ENCODE measurements at regions of chr10 and their contacts with region 1.

Region 1: GRCh38 chr10:103592186-103593021 is 98.9 kb downstream of the NEURL1 start:
- DNase-seq: peak in 1 of 2 donors; percentile 52
- ATAC-seq: no peak
- H3K4me3 ChIP-seq: no peak overlapping the region
- H3K27ac ChIP-seq: no peak overlapping the region
- H3K4me1 ChIP-seq: no peaks in the 10 kb centered on the region
- H3K27me3 ChIP-seq: no peaks in the 10 kb centered on the region

Region 2: GRCh38 chr10:102565793-102566192 is 1026.6 kb before region 1 on chr10:
- intact Hi-C with region 1: no loop called
- DNase-seq: no peak
- ATAC-seq: no peak
- H3K4me3 ChIP-seq: no peak overlapping the region
- H3K27ac ChIP-seq: no peak overlapping the region
- H3K4me1 ChIP-seq: no peaks in the 10 kb centered on the region
- H3K27me3 ChIP-seq: no peaks in the 10 kb centered on the region

Region 3: DNA sequence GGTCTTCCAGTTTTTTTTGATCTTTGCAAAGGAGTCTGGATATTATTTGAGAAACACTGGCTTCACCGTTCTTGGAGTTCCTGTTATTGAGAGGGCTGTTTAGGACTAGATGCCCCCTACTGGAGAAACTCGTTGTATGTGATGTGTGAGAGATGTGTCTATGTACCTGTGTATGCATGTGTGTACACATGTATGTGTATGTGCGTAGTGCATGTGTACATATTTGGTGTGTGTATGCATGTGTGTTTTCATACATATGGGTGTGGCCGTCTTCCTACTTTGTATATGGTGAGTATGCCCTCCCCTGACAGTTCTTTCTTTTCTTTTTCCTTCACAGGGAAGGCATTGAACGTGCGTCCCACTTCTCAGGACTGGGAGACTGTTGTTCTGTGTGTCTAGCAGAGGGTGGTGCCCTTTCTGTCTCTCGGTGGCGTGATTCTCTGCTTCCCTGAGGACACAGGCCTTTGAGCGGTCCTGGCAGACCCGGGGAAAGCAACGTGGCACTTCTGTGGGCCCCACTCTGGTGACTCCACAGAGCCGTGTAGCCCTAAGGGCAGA is 110.4 kb before region 1 on chr10:
- intact Hi-C with region 1: no loop called
- DNase-seq: no peak
- ATAC-seq: peak; percentile 76
- H3K4me3 ChIP-seq: no peak overlapping the region
- H3K27ac ChIP-seq: no peak overlapping the region
- H3K4me1 ChIP-seq: no peaks in the 10 kb centered on the region
- H3K27me3 ChIP-seq: no peaks in the 10 kb centered on the region

Region 4: DNA sequence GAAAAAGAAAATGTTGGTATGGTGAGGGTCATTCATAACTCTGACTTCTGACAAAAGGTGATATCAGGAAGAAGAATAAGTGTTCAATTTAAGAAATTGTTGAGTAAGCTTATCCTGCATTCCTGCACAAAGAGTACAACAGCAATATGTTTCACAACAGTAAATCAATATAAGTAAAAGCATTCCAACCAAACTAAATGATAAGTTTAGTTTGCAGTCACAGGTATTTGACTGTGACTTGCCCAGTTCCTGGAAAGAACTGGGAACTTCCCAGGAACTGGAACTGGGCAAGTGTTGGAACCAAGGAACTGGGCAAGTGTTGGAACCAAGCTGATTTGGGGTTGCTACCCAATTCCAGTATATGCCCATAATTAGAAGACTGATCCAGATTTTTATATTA is 63.8 kb before region 1 on chr10:
- intact Hi-C with region 1: no loop called
- DNase-seq: no peak
- ATAC-seq: no peak
- H3K4me3 ChIP-seq: no peak overlapping the region
- H3K27ac ChIP-seq: no peak overlapping the region
- H3K4me1 ChIP-seq: no peaks in the 10 kb centered on the region
- H3K27me3 ChIP-seq: no peaks in the 10 kb centered on the region

Region 5: GRCh38 chr10:103859161-103860086 is 267.0 kb after region 1 on chr10:
- intact Hi-C with region 1: loop called in 1 of 2 experiments (anchors 10 kb)
- DNase-seq: no peak
- ATAC-seq: peak; percentile 78
- H3K4me3 ChIP-seq: no peak overlapping the region
- H3K27ac ChIP-seq: no peak overlapping the region
- H3K4me1 ChIP-seq: no peaks in the 10 kb centered on the region
- H3K27me3 ChIP-seq: no peaks in the 10 kb centered on the region